Mucosa of descending colon (tissue), 3 donors: ENCODE measurements at regions of chr10 and their contacts with region 1.

Region 1: GRCh38 chr10:96292971-96293920 is 11.0 kb upstream of the DNTT start:
- DNase-seq: peak in 1 of 3 donors; percentile 29
- ATAC-seq: peak; percentile 93
- H3K4me3 ChIP-seq: no peak overlapping the region
- H3K4me1 ChIP-seq: no peaks in the 10 kb centered on the region
- CTCF ChIP-seq: no peak

Region 2: DNA sequence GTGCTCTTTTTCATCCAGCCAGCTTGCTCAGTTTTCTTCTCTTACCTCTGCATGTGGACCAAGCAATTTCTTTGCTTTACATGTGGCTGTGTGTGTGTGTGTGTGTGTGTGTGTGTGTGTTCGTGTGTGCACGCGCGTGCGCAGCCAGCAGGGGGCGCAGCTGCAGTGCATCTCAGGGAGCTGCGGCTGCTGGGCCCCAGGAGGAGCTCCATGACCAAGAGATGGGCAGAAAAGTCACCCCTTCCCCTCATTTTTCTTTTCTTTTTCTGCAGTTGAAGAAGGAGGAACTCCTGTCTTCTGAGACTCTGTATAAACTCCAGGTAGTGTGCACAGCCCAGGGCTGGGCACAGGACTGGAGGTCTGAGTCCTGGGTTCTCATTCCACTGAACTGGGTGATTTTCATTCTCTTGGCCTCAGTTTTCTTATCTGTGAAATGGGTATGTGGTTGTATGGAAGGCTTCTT is 63.6 kb before region 1 on chr10:
- intact Hi-C with region 1: loop called in 1 of 2 experiments (anchors 5 kb)
- DNase-seq: peak; percentile 84 to 94 (median 89)
- ATAC-seq: peak; percentile 96
- H3K4me3 ChIP-seq: no peak overlapping the region
- H3K4me1 ChIP-seq: no peaks in the 10 kb centered on the region
- CTCF ChIP-seq: no peak